Heart right ventricle (tissue), 16 donors: ENCODE measurements at regions of chr2 and their contacts with region 1.

Region 1: GRCh38 chr2:23351388-23352141 is 33.4 kb upstream of the KLHL29 start:
- DNase-seq: peak; percentile 87 to 90
- ATAC-seq: peak; percentile 93 to 97 (median 94)
- H3K4me3 ChIP-seq: peak overlapping the region in 4 of 10 donors; percentile 8 to 23 (median 15)
- H3K27ac ChIP-seq: peak overlapping the region in 8 of 10 donors; percentile 12 to 73 (median 50)
- H3K4me1 ChIP-seq: peaks cover 0 to 23% (median 11%) of the 10 kb centered on the region in 9 donors
- H3K27me3 ChIP-seq: peaks cover 0 to 22% (median 15%) of the 10 kb centered on the region in 7 donors
- CTCF ChIP-seq: peak; percentile 67 to 95 (median 88)

Region 2: DNA sequence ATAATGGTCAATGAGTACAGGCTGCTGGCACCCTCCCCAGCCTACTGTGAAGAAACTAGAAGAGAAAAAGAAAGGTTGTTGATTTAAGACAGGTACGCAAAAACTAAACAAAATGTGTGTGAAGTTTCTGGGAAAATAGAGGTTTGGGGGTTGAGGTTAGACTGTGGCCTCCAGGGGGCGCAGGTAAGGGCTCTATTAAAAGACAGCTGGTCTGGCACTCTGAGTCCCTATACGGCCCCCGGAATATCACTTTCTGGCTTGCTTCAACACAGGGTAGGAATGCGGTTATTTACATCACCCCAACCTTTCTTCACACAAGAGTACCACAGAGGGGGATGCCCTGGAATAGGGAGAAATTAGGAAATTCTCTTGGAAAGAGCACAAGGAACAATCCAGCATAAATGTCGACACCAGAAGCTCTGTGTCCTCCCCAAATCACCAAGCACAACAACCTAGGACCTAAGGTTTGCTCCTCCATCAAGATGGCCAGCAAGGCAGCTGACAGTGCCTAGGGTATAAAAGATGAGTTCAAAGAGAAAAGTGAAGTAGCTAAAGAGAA is 447.4 kb before region 1 on chr2:
- intact Hi-C with region 1: loop called in 3 of 10 experiments (anchors 5 to 10 kb)
- DNase-seq: peak; percentile 13 to 17
- ATAC-seq: peak in 1 of 8 donors; percentile 55
- H3K4me3 ChIP-seq: no peak overlapping the region
- H3K27ac ChIP-seq: no peak overlapping the region
- H3K4me1 ChIP-seq: no peaks in the 10 kb centered on the region
- H3K27me3 ChIP-seq: peaks cover 0 to 7% (median 0%) of the 10 kb centered on the region in 7 donors
- CTCF ChIP-seq: peak; percentile 9 to 64 (median 51)